HCT116 (cell line): ENCODE measurements at regions of chr12 and their contacts with region 1.

Region 1: GRCh38 chr12:32679091-32679919 is at the start of gene DNM1L:
- DNase-seq: peak; percentile 92
- ATAC-seq: peak; percentile 97
- H3K4me3 ChIP-seq: peak within 1 kb of the TSS; percentile 70 to 95
- H3K27ac ChIP-seq: peak within 1 kb of the TSS; percentile 88
- H3K4me1 ChIP-seq: peaks cover 15 to 28% of the 10 kb centered on the region in 2 experiments
- H3K27me3 ChIP-seq: no peaks in the 10 kb centered on the region
- CTCF ChIP-seq: peak in 1 of 3 experiments; percentile 7; a peak in 1 of 6 replicates
- POLR2A ChIP-seq: peak; percentile 83
- RAD21 ChIP-seq: no peak
- total RNA-seq, gene DNM1L: 69.7 TPM

Region 2: DNA sequence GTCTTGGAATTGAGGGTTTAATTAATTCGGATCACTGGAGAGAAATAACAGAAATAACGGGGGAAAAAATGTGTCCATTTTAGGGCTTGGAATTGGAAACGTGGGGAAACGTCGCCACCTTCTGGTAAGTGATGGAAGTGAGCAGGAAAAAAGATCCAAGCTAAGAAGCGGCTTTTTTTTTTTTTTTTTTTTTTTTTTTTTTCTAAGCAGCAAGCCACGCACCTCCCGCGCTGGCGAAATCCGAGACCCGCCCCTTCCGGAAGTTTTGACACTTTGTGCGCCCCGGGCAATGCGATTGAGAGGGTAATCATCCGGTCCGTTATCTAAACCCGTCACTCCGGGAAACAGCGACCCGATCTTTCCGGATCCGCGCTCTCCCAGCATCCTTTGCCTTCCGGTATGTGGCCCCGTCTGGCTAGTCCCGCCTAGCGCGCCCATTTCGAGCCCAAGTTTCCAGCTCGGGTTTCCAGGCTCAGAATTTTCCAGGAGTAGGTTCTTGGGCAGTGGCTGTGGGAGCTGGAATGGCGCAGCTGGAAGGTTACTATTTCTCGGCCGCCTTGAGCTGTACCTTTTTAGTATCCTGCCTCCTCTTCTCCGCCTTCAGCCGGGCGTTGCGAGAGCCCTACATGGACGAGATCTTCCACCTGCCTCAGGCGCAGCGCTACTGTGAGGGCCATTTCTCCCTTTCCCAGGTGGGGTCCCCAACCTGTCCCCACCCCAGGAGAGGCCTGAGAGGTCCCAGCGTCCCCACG is 1343.0 kb after region 1 on chr12 and contains the start of gene ALG10:
- CTCF ChIA-PET with region 1: no interaction called
- POLR2A ChIA-PET with region 1: no interaction called
- RAD21 ChIA-PET with region 1: no interaction called
- intact Hi-C with region 1: loop called (anchors 10 kb)
- DNase-seq: peak; percentile 93
- ATAC-seq: peak; percentile 100
- H3K4me3 ChIP-seq: peak within 1 kb of the TSS; percentile 79 to 87
- H3K27ac ChIP-seq: peak within 1 kb of the TSS; percentile 49
- H3K4me1 ChIP-seq: peaks cover 0 to 8% of the 10 kb centered on the region in 2 experiments; a peak in 2 of 4 replicates
- H3K27me3 ChIP-seq: no peaks in the 10 kb centered on the region
- CTCF ChIP-seq: peak; percentile 57 to 67 (median 62)
- POLR2A ChIP-seq: no peak
- RAD21 ChIP-seq: peak; percentile 86
- total RNA-seq, gene ALG10: 9.6 TPM